Activated T-helper 1 cell treated with anti-CD3 and anti-CD28 coated beads, Interleukin-12 subunit alpha, Interleukin-12 subunit beta, Interleukin-2, Interleukin-4 antibody, amounts not matched to agents 30 ng/mL and 10 ng/mL and 1 ng/mL, durations not matched to agents 14 hours and 24 hours and 36 hours (primary cell): ENCODE measurements at regions of chr9 and their contacts with region 1.

Region 1: GRCh38 chr9:34989003-34989945 is at the start of gene DNAJB5:
- DNase-seq: peak; percentile 96
- H3K4me3 Mint-ChIP-seq: peak within 1 kb of the TSS; percentile 94
- H3K27ac Mint-ChIP-seq: peak within 1 kb of the TSS; percentile 98
- H3K4me1 Mint-ChIP-seq: peaks cover 87% of the 10 kb centered on the region
- H3K27me3 Mint-ChIP-seq: no peaks in the 10 kb centered on the region
- total RNA-seq, gene DNAJB5: 5.3 and 6.0 TPM in 2 replicates

Region 2: GRCh38 chr9:34620061-34620994 is 368.9 kb before region 1 on chr9 and contains the start of gene DCTN3:
- intact Hi-C with region 1: loop called (anchors 1 kb)
- DNase-seq: peak; percentile 91
- H3K4me3 Mint-ChIP-seq: peak within 1 kb of the TSS; percentile 89
- H3K27ac Mint-ChIP-seq: peak within 1 kb of the TSS; percentile 80
- H3K4me1 Mint-ChIP-seq: peaks cover 41% of the 10 kb centered on the region
- H3K27me3 Mint-ChIP-seq: peaks cover 31% of the 10 kb centered on the region
- total RNA-seq, gene DCTN3: 59.3 and 62.2 TPM in 2 replicates

Region 3: DNA sequence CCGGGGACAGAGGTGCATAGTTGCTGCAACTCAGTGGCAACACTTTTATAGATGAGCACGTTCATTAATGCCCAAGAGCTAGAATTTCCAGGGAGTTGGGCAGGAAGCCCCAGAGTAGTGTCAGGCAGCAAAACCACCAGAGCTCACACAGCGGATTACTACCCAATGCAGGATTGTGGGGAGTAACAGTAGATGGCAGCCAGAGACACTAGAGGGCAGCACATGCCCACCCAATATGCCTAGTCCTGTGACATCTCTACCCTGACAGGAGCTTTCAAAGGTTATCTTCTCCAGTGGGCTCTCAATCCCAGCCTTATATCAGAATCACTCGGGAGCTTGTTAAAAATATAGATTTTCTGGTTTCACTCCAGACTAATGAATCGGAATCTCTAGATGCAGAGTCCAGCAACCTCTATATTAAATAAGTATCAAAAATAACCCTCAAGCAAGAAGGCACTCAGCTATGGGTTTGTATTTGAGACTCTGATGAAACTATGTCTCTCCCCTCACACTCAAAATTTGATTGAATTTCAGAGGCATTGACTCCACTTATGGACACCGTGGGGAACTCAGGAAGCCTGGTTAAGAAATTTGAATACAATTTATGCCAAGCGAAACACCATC is 89.6 kb before region 1 on chr9:
- intact Hi-C with region 1: loop called (anchors 1 kb)
- DNase-seq: peak; percentile 71
- H3K4me3 Mint-ChIP-seq: no peak overlapping the region
- H3K27ac Mint-ChIP-seq: no peak overlapping the region
- H3K4me1 Mint-ChIP-seq: no peaks in the 10 kb centered on the region
- H3K27me3 Mint-ChIP-seq: peaks cover 24% of the 10 kb centered on the region

Region 4: GRCh38 chr9:35035851-35036701 is 46.8 kb after region 1 on chr9:
- intact Hi-C with region 1: loop called (anchors 2 kb)
- DNase-seq: peak; percentile 57
- H3K4me3 Mint-ChIP-seq: peak overlapping the region; percentile 57
- H3K27ac Mint-ChIP-seq: peak overlapping the region; percentile 56
- H3K4me1 Mint-ChIP-seq: peaks cover 6% of the 10 kb centered on the region
- H3K27me3 Mint-ChIP-seq: no peaks in the 10 kb centered on the region

Region 5: DNA sequence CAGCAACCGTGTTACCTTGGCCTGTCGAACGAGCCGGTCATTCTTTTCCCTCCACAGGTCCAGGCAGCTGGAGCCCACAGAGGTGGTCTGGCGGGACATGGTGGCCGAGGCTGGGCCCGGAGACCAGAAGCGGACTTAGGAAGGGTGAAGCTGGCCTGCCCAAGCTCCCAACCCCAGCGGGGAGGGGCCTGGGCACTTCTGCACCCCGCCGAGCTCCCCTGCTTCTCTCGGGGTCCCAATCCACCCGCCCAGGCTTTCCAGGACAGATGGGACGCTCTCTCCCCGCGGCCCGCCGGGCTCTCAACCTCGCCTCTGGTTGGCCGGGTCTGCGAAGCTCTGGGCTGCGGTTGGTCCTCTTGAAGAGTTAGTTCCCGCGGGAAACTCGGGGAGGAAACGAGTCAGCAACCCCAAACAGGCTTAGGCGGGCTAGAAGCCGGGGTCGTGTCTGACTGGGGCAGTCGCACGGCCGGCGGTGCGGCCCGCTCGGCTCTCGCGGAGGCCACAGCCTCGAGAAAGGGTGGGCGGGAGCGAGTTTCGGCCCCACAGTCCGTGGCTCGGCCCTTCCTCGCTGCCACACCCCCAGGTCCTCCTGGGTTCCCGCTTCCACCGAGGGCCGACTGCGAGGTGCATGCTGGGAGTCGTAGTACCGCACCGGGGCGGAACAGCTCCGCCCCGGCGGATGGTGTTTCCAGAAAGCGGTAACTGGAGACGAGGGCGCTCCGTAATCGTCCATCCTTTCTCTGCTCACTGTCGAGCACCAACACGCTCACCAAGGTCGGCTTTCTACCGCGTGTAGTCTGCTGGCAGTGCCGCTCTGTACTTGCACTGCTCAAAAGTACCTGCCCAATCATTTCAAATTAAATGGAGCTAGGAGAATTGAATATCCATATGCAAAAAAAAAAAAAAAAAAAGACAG is 90.4 kb after region 1 on chr9 and contains the start of gene FANCG:
- intact Hi-C with region 1: no loop called
- DNase-seq: peak; percentile 86
- H3K4me3 Mint-ChIP-seq: peak within 1 kb of the TSS; percentile 96
- H3K27ac Mint-ChIP-seq: peak within 1 kb of the TSS; percentile 98
- H3K4me1 Mint-ChIP-seq: peaks cover 32% of the 10 kb centered on the region
- H3K27me3 Mint-ChIP-seq: no peaks in the 10 kb centered on the region
- total RNA-seq, gene FANCG: 102 and 104 TPM in 2 replicates

Region 6: GRCh38 chr9:35096035-35096849 is 107.0 kb after region 1 on chr9 and contains the start of gene PIGO:
- intact Hi-C with region 1: loop called (anchors 1 kb)
- DNase-seq: peak; percentile 85
- H3K4me3 Mint-ChIP-seq: peak within 1 kb of the TSS; percentile 85
- H3K27ac Mint-ChIP-seq: peak within 1 kb of the TSS; percentile 90
- H3K4me1 Mint-ChIP-seq: peaks cover 33% of the 10 kb centered on the region
- H3K27me3 Mint-ChIP-seq: no peaks in the 10 kb centered on the region
- total RNA-seq, gene PIGO: 34.4 and 39.7 TPM in 2 replicates

Region 7: DNA sequence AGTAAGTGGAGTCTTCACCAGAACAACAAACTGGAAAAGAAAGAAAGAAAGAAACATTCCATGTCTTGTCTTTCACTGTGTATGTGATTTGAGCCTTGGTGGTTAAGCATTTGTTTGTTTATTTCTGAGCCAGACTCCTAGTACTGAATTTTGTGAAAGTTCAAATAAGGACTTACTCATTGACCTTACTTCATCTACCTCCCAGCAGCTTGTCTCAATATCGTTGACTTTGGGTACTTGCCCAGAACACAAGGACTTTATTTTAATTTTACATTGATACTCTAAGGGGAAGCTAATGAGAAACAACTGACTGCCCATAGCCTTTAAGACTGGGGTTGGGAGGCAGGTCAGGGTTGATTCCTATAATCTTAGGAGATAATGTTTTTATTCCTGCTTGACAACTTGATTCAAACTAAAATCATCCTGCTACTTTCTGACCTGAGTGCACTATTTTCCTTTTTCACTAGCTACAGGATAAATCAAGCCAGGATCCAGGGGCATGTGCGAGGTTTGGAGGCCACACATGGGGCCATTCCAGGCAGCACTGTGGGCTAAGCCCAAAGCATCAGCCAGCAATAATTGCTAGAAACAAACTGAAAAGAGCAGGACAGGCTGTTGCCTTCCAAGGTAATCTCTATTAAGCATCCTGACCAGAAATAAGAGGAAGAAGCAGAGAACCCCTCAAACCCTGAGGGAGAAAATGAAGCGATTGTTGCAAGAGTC is 361.7 kb after region 1 on chr9:
- intact Hi-C with region 1: no loop called
- DNase-seq: no peak
- H3K4me3 Mint-ChIP-seq: no peak overlapping the region
- H3K27ac Mint-ChIP-seq: no peak overlapping the region
- H3K4me1 Mint-ChIP-seq: no peaks in the 10 kb centered on the region
- H3K27me3 Mint-ChIP-seq: peaks cover 5% of the 10 kb centered on the region

Region 8: DNA sequence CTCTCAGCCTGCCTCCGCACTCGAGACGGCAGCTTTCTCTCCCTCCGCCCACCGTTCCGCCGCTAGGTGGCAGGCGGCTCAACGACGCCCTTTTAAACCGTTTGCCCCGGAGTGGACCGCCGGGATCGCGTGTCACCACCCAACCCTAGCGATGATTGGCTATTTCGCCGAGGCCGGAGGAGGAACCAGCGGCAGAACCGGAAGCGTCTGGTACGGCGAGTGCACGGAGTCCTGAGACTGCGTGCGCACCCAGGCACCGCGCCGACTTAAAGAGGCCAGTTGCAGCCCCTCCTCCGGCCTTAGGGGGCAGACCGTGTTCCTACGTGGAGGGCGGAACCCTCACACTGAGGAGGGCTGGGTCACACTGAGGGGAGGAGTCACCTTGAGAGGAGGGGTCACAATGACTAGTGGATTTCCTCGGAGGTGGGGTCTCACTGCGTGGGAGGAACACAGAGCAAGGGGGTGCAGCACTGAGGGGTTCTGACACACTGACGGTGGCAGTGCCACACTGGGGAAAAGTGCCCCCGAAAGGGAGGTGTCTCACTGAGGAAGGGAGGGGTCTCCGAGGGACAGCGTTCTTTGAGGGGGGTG is 614.8 kb after region 1 on chr9:
- intact Hi-C with region 1: loop called (anchors 1 kb)
- DNase-seq: peak; percentile 99
- H3K4me3 Mint-ChIP-seq: peak overlapping the region; percentile 91
- H3K27ac Mint-ChIP-seq: peak overlapping the region; percentile 99
- H3K4me1 Mint-ChIP-seq: peaks cover 34% of the 10 kb centered on the region
- H3K27me3 Mint-ChIP-seq: peaks cover 2% of the 10 kb centered on the region